Mammary epithelial cell (primary cell): ENCODE measurements at regions of chr2 and their contacts with region 1.

Region 1: DNA sequence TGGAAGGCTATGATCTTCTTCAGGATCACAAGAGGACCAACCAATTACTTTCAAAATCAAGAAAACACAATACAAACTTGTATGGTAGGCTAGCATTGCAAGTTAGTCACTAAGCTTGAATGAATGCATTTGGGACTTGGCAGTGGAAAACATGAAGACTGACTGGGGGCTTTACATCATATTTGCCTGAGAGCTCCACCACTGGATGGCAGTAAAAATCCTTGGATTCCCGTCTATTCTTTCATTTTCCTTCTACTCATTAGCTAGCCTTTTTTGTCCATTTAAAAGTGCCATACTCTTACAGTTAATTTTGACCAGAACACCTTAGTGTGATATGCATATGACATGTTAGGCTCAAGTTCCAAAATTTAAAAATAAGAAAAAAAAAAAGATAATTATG is 63.5 kb upstream of the RASGRP3 start:
- DNase-seq: peak; percentile 16
- H3K4me3 ChIP-seq: no peak overlapping the region
- H3K27ac ChIP-seq: no peak overlapping the region
- H3K4me1 ChIP-seq: peaks cover 10% of the 10 kb centered on the region
- H3K27me3 ChIP-seq: no peaks in the 10 kb centered on the region
- CTCF ChIP-seq: peak; percentile 40 to 47

Region 2: GRCh38 chr2:33583194-33583938 is 170.4 kb after region 1 on chr2:
- CTCF ChIA-PET with region 1: interaction called, 16 read pairs
- dilution Hi-C with region 1: no loop called
- in situ Hi-C with region 1: no loop called
- intact Hi-C with region 1: loop called (anchors 2 kb)
- DNase-seq: peak; percentile 7
- H3K4me3 ChIP-seq: no peak overlapping the region
- H3K27ac ChIP-seq: no peak overlapping the region
- H3K4me1 ChIP-seq: no peaks in the 10 kb centered on the region
- H3K27me3 ChIP-seq: no peaks in the 10 kb centered on the region
- CTCF ChIP-seq: peak; percentile 71 to 85